Activated B cell treated with CpG ODN at 0.5 μM for 24 hours (primary cell): ENCODE measurements at regions of chr13 and their contacts with region 1.

Region 1: DNA sequence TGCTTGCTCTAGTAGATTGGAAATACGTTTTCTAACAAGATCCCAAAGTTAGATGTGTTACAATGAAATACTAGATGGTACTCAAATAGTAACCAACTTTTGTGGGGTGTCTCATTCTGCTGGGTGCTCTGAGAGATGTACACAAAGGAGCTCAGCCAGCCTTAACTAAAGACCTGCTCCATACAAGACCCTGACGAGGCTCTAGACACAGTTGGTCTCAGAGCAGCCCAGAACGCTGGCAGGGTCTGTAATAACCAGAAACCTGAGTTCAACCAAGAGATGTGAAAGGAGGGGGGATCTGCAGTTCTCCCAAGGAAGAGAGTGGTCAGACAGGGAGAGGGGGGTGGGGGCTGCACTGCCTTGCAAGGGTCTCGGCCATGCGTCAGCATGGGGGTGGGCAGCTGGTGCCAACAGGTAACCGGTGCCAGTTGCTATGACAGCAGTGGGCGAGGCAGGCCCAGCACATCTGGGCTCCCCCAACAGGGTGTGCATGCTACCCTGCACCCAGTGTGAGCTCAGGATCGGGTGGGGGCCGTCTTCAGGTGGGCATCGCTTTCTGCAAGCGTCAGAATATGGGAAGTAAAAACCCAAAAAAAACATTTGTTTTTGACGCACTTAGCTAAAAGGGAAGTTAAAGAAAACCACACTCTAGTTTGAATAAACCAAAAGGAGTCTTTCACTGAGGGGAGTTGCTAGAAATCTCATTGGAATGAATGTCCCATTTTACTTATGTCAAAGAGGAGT is 68.0 kb upstream of the GPR183 start:
- DNase-seq: peak; percentile 78
- ATAC-seq: peak; percentile 80
- H3K4me3 Mint-ChIP-seq: peak overlapping the region; percentile 72
- H3K27ac Mint-ChIP-seq: peak overlapping the region; percentile 98
- H3K4me1 Mint-ChIP-seq: peaks cover 92% of the 10 kb centered on the region
- H3K27me3 Mint-ChIP-seq: no peaks in the 10 kb centered on the region
- CTCF ChIP-seq: no peak

Region 2: GRCh38 chr13:99258210-99258860 is 116.8 kb before region 1 on chr13 and contains the start of gene GPR18:
- CTCF ChIA-PET with region 1: no interaction called
- POLR2A ChIA-PET with region 1: interaction called, 12 read pairs
- intact Hi-C with region 1: no loop called
- DNase-seq: no peak
- ATAC-seq: peak; percentile 65
- H3K4me3 Mint-ChIP-seq: peak within 1 kb of the TSS; percentile 94
- H3K27ac Mint-ChIP-seq: peak within 1 kb of the TSS; percentile 96
- H3K4me1 Mint-ChIP-seq: peaks cover 86% of the 10 kb centered on the region
- H3K27me3 Mint-ChIP-seq: no peaks in the 10 kb centered on the region
- CTCF ChIP-seq: no peak
- total RNA-seq, gene GPR18: 29.0 and 32.4 TPM in 2 replicates

Region 3: DNA sequence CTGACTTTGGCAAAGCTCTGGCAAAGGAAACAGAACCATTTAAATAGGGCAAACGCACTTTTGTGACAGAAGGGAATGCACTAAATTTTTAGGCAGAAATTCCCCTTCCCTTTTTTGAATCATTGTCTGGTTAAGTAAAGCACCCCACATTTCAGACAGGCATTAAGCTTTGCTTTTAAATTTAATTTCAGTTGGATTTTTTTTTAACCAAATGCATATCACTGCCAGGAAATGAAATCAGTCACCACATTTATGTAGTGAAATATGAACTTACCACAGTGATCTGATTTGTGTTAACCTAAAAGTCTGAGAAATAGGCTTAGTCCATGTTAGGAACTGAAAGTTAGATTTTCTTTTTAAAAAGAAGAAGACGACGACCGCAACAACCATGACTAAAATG is 78.8 kb before region 1 on chr13:
- CTCF ChIA-PET with region 1: no interaction called
- POLR2A ChIA-PET with region 1: interaction called, 22 read pairs
- intact Hi-C with region 1: no loop called
- DNase-seq: no peak
- ATAC-seq: peak; percentile 45
- H3K4me3 Mint-ChIP-seq: peak overlapping the region; percentile 74
- H3K27ac Mint-ChIP-seq: peak overlapping the region; percentile 92
- H3K4me1 Mint-ChIP-seq: peaks cover 87% of the 10 kb centered on the region
- H3K27me3 Mint-ChIP-seq: no peaks in the 10 kb centered on the region
- CTCF ChIP-seq: no peak

Region 4: DNA sequence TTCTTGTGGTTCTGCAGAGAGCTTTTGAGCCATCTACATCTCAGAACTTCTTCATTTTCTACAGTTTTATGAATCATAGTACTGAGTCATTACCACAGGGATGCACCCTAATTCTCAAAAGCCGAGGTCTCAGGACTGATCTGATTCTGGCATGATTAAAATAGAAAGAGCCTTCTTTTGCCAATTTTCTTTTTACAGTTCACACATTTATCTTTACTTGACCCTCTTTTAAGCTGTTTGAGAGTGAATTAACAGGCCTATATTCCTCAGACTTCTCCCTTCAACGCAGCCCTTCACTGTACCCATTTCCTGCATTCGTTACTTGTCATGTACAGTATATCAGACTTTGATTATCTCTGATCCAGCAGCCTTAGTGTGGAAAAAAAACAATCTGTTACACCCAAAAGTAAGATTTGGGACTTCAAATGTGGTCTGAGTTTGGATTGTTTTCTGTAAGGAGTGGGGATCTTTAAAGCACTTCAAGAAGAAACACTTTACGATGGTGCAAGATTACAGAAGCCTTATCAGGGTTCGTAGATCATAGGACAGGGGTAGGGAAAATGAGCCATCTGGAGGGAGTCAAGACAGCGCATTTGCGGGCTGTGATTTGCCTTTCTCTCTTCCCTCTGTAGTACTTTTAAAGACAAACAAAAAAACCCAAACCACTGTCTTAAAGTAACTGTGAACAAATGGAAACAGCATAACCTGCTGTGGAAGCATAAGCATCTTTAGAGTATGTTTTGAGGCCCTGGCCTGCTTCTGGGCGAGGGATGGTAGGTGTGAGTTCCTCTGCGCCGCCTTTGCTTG is 52.7 kb before region 1 on chr13:
- CTCF ChIA-PET with region 1: interaction called, 3 read pairs
- POLR2A ChIA-PET with region 1: interaction called, 22 read pairs
- intact Hi-C with region 1: loop called (anchors 1 kb)
- DNase-seq: no peak
- ATAC-seq: peak; percentile 87
- H3K4me3 Mint-ChIP-seq: peak overlapping the region; percentile 56
- H3K27ac Mint-ChIP-seq: peak overlapping the region; percentile 91
- H3K4me1 Mint-ChIP-seq: peaks cover 66% of the 10 kb centered on the region
- H3K27me3 Mint-ChIP-seq: no peaks in the 10 kb centered on the region
- CTCF ChIP-seq: no peak

Region 5: DNA sequence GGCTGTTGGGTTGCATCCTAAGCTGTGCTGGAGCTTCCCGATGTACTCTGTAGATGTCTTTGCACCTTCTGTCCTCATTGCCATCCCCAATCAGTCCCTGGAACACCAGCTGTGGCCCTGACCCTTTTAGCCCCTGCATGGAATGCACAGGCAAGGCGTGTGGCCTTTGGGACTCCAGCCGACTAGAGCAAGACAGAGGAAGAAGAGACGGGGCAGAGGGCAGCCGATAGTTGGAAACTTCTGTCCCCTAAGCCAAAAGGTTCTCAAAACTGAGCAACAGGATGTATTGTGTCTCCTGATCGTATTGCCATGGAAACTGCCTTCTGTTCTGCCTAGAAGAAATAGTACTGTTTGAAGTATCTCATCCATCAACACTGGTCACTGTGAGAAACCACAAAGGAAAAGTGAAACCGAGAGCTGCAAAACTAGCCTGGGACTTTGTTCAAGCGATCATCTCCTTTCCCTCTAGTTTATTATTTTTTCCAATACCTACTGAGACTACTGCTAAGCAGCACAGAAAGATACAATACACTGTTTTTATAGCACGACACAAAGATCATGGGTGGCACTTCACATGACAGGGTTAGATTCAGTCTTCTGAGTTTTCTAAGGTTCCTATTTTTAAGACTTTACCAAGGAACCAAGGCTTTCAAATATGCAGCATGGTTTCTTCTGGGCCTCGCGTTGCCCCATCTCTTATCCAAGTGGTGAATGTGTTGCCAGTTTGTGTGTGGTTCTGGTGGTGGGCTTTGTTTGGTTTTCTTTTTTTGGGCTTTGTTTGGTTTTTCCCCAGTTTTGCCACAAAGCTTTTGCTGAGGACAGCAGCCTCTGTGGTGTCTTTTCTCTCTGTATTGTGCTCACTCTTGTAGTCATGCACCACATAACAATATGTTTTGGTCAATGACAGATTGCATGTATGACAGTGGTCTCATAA is 18.7 kb before region 1 on chr13:
- CTCF ChIA-PET with region 1: interaction called, 7 read pairs
- POLR2A ChIA-PET with region 1: interaction called, 49 read pairs
- intact Hi-C with region 1: loop called (anchors 1 kb)
- DNase-seq: peak; percentile 40
- ATAC-seq: peak; percentile 49
- H3K4me3 Mint-ChIP-seq: peak overlapping the region; percentile 70
- H3K27ac Mint-ChIP-seq: peak overlapping the region; percentile 94
- H3K4me1 Mint-ChIP-seq: peaks cover 97% of the 10 kb centered on the region
- H3K27me3 Mint-ChIP-seq: no peaks in the 10 kb centered on the region
- CTCF ChIP-seq: no peak

Region 6: GRCh38 chr13:99436686-99437416 is 61.7 kb after region 1 on chr13:
- CTCF ChIA-PET with region 1: interaction called, 203 read pairs
- POLR2A ChIA-PET with region 1: interaction called, 21 read pairs
- intact Hi-C with region 1: loop called (anchors 1 kb)
- DNase-seq: peak; percentile 87
- ATAC-seq: peak; percentile 59
- H3K4me3 Mint-ChIP-seq: peak overlapping the region; percentile 66
- H3K27ac Mint-ChIP-seq: peak overlapping the region; percentile 76
- H3K4me1 Mint-ChIP-seq: peaks cover 66% of the 10 kb centered on the region
- H3K27me3 Mint-ChIP-seq: peaks cover 2% of the 10 kb centered on the region
- CTCF ChIP-seq: peak; percentile 99

Region 7: DNA sequence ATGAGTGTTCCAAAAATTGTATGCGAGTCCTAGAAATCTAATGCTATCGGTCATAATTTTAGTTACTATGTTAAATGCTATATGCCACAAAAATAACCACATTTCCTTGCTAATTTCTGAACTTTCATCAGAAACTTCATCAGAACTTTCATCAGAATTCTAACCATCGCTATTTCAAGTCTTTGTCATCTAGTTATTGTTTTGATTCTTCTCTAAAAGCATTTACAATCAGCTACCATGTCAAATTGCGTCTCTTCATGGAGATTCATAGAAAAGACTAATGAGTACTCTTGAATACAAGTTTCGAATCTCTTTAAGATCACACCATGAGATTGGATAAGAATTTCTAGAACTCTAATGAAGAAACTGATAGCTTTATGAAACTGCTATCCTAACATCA is 73.4 kb after region 1 on chr13:
- CTCF ChIA-PET with region 1: no interaction called
- POLR2A ChIA-PET with region 1: no interaction called
- intact Hi-C with region 1: no loop called
- DNase-seq: no peak
- ATAC-seq: no peak
- H3K4me3 Mint-ChIP-seq: no peak overlapping the region
- H3K27ac Mint-ChIP-seq: no peak overlapping the region
- H3K4me1 Mint-ChIP-seq: no peaks in the 10 kb centered on the region
- H3K27me3 Mint-ChIP-seq: no peaks in the 10 kb centered on the region
- CTCF ChIP-seq: no peak

Region 8: DNA sequence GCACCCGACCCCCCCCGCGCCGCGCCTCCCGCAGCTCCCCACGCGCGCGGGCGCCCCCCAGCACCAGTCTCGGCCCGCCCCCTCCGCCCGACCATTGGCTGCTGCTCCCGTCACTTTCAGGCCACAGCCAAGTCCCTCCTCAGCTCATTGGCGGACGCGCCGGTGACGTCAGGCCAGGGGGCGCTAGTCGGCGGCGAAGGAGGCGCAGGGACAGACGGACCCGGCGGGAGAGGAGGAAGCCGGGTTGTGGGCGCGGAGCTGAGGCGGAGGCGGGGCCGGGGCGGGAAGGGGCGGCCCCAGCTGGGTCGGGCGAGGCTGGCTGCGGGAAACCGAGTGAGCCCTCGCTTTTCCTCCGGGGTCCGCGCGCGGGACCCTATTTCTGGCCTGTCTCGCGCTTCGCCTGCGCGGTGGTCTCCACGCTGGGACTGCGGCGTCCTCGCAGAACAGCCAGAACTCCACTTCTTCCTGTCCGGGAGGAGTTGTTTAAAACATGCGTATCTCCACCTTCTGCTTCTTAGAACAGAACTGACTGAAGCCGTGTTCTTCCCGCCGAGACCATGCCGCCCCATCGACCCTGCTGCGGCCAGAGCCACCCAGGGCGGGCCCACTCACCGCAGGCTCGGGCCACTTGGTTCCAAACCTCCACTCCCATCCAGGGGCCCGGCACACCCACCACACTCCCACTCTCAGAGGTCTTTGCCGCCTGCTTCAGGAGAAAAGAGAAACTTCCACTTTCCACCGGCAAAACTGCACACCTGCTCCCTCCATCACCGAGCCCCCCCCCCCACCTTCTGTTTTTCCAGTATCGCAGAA is 1299.9 kb after region 1 on chr13:
- CTCF ChIA-PET with region 1: no interaction called
- POLR2A ChIA-PET with region 1: no interaction called
- intact Hi-C with region 1: loop called (anchors 10 kb)
- DNase-seq: peak; percentile 100
- ATAC-seq: peak; percentile 93
- H3K4me3 Mint-ChIP-seq: peak overlapping the region; percentile 84
- H3K27ac Mint-ChIP-seq: peak overlapping the region; percentile 77
- H3K4me1 Mint-ChIP-seq: peaks cover 18% of the 10 kb centered on the region
- H3K27me3 Mint-ChIP-seq: no peaks in the 10 kb centered on the region
- CTCF ChIP-seq: no peak